Left lung (tissue), 14 donors: ENCODE measurements at regions of chr1 and their contacts with region 1.

Region 1: GRCh38 chr1:205485338-205486228 is 18.9 kb upstream of the CDK18 start:
- DNase-seq: peak in 3 of 4 donors; percentile 46 to 80 (median 52)
- ATAC-seq: peak; percentile 93
- H3K4me3 ChIP-seq: no peak overlapping the region
- H3K27ac ChIP-seq: no peak overlapping the region
- H3K4me1 ChIP-seq: no peaks in the 10 kb centered on the region
- H3K27me3 ChIP-seq: peaks cover 0 to 57% of the 10 kb centered on the region in 2 donors
- CTCF ChIP-seq: peak; percentile 95 to 99

Region 2: GRCh38 chr1:205354259-205354904 is 131.2 kb before region 1 on chr1:
- intact Hi-C with region 1: loop called in 1 of 2 experiments (anchors 10 kb)
- DNase-seq: peak in 2 of 4 donors; percentile 43 to 78
- ATAC-seq: peak; percentile 83
- H3K4me3 ChIP-seq: no peak overlapping the region
- H3K27ac ChIP-seq: peak overlapping the region in 1 of 2 donors; percentile 10
- H3K4me1 ChIP-seq: peaks cover 0 to 6% of the 10 kb centered on the region in 2 donors
- H3K27me3 ChIP-seq: peaks cover 0 to 7% of the 10 kb centered on the region in 2 donors
- CTCF ChIP-seq: peak; percentile 72 to 84

Region 3: DNA sequence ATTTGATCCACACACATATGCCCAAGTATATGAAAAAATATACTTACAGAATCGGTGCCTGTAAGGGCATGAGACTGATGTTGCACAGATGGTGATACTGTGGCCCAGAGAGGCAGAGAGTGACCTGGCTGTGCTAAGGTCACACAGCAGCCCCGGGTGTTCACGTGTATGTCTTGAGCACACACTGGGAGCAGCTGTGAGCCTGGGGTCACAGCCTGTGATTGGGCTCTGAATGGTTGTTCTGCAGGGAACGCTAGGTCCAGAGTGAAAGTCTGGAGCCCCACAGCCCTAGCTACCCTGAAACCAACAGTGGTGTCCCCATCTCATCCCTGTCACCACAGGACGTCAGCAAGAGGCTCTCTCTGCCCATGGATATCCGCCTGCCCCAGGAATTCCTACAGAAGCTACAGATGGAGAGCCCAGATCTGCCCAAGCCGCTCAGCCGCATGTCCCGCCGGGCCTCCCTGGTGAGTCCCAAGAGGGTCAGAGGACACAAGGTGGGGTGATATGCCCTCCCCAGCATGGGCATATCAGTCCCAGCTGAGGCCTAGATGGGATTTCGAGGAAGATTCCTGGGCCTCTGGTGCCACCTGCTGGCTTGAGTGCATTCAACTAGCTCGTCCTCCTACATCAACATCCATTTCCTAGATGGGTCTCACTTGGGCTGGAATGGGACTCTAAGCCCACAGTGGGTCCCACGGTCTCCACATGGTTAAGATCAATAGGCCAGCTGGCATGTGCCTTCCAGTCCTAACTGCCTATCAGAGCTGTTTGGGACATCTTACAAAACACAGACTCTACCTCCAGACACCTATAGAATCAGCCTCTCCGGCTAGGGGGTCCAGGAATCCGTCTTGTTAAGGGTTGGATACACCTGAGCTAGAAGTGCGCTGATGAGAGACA is 38.6 kb after region 1 on chr1:
- intact Hi-C with region 1: loop called in 1 of 2 experiments (anchors 5 kb)
- DNase-seq: peak in 3 of 4 donors; percentile 57 to 78 (median 65)
- ATAC-seq: peak; percentile 70
- H3K4me3 ChIP-seq: no peak overlapping the region
- H3K27ac ChIP-seq: no peak overlapping the region
- H3K4me1 ChIP-seq: peaks cover 0 to 6% of the 10 kb centered on the region in 2 donors
- H3K27me3 ChIP-seq: no peaks in the 10 kb centered on the region
- CTCF ChIP-seq: peak; percentile 55 to 78

Region 4: GRCh38 chr1:205950280-205950679 is 464.7 kb after region 1 on chr1:
- intact Hi-C with region 1: no loop called
- DNase-seq: no peak
- ATAC-seq: peak; percentile 7
- H3K4me3 ChIP-seq: no peak overlapping the region
- H3K27ac ChIP-seq: no peak overlapping the region
- H3K4me1 ChIP-seq: peaks cover 4 to 17% of the 10 kb centered on the region in 2 donors
- H3K27me3 ChIP-seq: no peaks in the 10 kb centered on the region
- CTCF ChIP-seq: no peak